ENCODE measurements at regions of chr19 and their contacts with region 1.

Region 1: GRCh38 chr19:8505680-8506401 is 3.4 kb upstream of the PRAM1 start:
- DNase-seq: peak; percentile 72 to 86
- H3K4me3 ChIP-seq: peak overlapping the region; percentile 51 to 61
- H3K27ac ChIP-seq: peak overlapping the region in 1 of 2 donors; percentile 22
- H3K4me1 ChIP-seq: peaks cover 0 to 16% (median 15%) of the 10 kb centered on the region in 4 donors
- H3K27me3 ChIP-seq: no peaks in the 10 kb centered on the region
- CTCF ChIP-seq: peak; percentile 85 to 86

Region 2: GRCh38 chr19:8261347-8262310 is 244.2 kb before region 1 on chr19:
- intact Hi-C with region 1: loop called (anchors 10 kb)
- DNase-seq: peak in 1 of 2 donors; percentile 59
- H3K4me3 ChIP-seq: no peak overlapping the region
- H3K27ac ChIP-seq: no peak overlapping the region
- H3K4me1 ChIP-seq: no peaks in the 10 kb centered on the region
- H3K27me3 ChIP-seq: peaks cover 0 to 6% of the 10 kb centered on the region in 2 donors
- CTCF ChIP-seq: no peak

Region 3: GRCh38 chr19:8334458-8335342 is 171.1 kb before region 1 on chr19:
- intact Hi-C with region 1: no loop called
- DNase-seq: no peak
- H3K4me3 ChIP-seq: peak overlapping the region; percentile 20 to 45
- H3K27ac ChIP-seq: no peak overlapping the region
- H3K4me1 ChIP-seq: peaks cover 0 to 25% (median 11%) of the 10 kb centered on the region in 4 donors
- H3K27me3 ChIP-seq: peaks cover 0 to 24% of the 10 kb centered on the region in 2 donors
- CTCF ChIP-seq: no peak

Measured in tibial artery (tissue), 4 donors.